ENCODE measurements at regions of chr14 and their contacts with region 1.

Region 1: DNA sequence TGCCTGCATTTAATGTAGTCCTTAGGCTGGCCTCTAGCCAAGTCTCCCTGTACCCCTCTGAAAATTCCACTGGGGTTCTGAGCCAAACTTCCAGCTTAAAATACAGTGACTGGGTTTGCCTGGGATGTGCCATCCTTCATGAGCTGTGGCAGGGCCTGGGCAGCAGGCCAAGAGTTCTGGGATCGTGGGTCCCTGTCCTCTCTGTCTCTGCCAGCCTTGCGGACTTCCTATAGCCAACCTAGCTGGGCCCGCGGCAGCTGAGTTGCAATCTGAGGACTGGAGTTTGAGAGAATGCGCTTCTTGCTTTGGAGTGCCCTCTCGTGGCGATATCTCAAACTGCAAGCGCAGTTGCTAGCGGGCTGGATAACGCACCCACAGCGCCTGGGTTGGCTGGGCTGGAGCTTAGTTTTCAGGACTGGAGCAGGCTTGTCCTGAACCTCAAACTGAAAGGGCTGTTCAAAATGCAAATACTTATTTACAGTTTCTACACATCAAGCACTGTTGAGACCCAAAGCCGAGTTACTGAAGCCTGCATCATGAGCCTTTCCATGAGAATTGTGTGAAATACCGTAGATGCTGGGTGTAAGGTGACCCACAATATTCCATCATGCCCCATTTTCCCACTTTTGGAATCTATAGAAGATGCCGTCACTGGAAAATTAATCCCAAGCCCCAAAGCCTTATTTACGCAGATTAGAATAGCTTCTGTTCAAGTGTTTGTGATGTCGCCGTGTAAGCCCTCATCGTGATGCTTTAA is 7.3 kb upstream of the IFI27L2 start:
- DNase-seq: peak; percentile 75
- CTCF ChIP-seq: peak; percentile 93

Region 2: GRCh38 chr14:93923626-93924025 is 213.1 kb before region 1 on chr14:
- CTCF ChIA-PET with region 1: no interaction called
- POLR2A ChIA-PET with region 1: no interaction called
- DNase-seq: no peak
- CTCF ChIP-seq: no peak

Region 3: GRCh38 chr14:94021001-94021400 is 115.8 kb before region 1 on chr14:
- CTCF ChIA-PET with region 1: interaction called, 13 read pairs
- POLR2A ChIA-PET with region 1: no interaction called
- DNase-seq: no peak
- CTCF ChIP-seq: no peak

Region 4: DNA sequence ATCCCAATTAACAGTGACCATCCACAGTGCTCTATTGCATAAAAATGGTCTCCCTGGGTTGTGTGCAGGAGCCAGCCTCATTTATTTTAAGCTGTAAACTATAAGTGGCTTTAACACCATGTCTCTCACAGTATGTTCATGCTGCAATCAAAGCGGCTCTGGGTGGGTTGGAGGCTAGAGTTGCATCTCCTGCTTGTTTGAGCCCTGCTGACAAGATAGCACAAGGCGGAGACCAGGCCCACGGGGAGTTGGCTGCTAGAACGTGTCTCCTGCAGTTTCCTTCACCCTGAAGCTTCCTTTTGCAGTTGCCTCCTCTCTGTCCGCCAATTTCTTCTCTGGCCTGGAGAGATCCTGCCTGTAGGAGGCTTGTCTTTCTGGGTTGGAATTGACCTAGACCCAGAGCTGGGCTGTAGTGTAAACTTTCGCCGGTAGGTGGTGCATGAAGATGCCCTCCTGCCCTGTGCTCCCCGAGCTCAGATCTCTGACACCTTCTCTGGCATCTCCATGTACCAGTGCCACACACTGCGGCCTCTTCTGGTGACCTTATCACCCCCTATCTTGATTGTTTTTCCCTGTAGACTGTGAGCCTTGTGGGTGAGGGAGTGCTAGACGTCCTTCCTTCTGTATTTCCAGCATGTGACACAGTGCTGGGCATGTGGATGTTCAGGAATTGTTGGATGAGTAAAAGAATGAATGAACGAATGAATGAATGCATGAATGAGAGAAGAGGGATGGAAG is 100.3 kb before region 1 on chr14:
- CTCF ChIA-PET with region 1: interaction called, 182 read pairs
- POLR2A ChIA-PET with region 1: no interaction called
- DNase-seq: peak; percentile 84
- CTCF ChIP-seq: peak; percentile 75

Region 5: GRCh38 chr14:94100847-94101246 is 35.9 kb before region 1 on chr14:
- CTCF ChIA-PET with region 1: interaction called, 14 read pairs
- POLR2A ChIA-PET with region 1: no interaction called
- DNase-seq: no peak
- CTCF ChIP-seq: no peak

Region 6: DNA sequence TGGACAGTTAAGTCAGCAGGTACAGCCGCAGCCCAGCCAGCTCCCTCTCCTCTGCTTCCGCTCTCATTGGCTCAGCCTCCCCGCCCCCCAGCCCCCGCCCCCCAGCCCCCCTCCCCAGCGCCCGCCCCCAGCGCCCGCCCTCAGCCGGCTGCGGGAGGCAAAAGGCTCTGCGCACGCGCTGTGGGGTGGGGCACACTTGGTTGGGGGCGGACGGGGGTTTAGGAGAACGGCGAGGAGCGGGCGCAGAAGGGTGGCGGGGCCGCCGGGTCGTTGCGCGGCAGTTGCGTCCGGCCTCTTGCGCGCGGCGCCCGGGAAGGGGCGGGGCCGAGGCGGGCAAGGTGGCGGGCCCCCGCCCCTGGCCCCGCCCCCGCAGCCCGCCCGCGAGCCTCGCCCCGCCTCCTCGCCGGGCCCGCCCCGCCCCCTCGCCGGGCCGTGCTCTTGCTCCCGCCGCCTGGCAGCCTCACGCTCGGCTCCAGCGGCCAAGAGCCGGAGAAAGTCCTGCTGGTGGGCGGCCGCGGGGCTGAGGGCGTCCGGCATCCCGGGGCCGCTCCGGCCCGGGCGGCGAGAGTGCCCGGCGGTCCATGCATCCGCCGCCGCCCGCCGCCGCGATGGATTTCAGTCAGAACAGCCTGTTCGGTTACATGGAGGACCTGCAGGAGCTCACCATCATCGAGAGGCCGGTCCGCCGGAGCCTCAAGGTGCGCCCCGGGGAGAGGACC is 37.3 kb after region 1 on chr14 and contains the start of gene PPP4R4:
- CTCF ChIA-PET with region 1: interaction called, 17 read pairs
- POLR2A ChIA-PET with region 1: no interaction called
- DNase-seq: peak; percentile 93
- CTCF ChIP-seq: no peak

Region 7: GRCh38 chr14:94373708-94374107 is 237.0 kb after region 1 on chr14:
- CTCF ChIA-PET with region 1: no interaction called
- POLR2A ChIA-PET with region 1: no interaction called
- DNase-seq: no peak
- CTCF ChIP-seq: no peak